B cell (primary cell): ENCODE measurements at regions of chr22 and their contacts with region 1.

Region 1: GRCh38 chr22:44080936-44081861 is 57.1 kb downstream of the PARVB start:
- DNase-seq: peak; percentile 80
- ATAC-seq: peak; percentile 61
- H3K4me3 ChIP-seq: no peak overlapping the region
- H3K4me3 Mint-ChIP-seq: no peak overlapping the region
- H3K27ac ChIP-seq: no peak overlapping the region
- H3K27ac Mint-ChIP-seq: no peak overlapping the region
- H3K4me1 ChIP-seq: peaks cover 0 to 9% of the 10 kb centered on the region in 2 donors
- H3K4me1 Mint-ChIP-seq: peaks cover 2% of the 10 kb centered on the region
- H3K27me3 ChIP-seq: no peaks in the 10 kb centered on the region
- H3K27me3 Mint-ChIP-seq: no peaks in the 10 kb centered on the region
- CTCF ChIP-seq: peak; percentile 90

Region 2: GRCh38 chr22:43726322-43726721 is 354.9 kb before region 1 on chr22:
- CTCF ChIA-PET with region 1: no interaction called
- POLR2A ChIA-PET with region 1: no interaction called
- intact Hi-C with region 1: no loop called
- DNase-seq: no peak
- ATAC-seq: no peak
- H3K4me3 ChIP-seq: no peak overlapping the region
- H3K4me3 Mint-ChIP-seq: no peak overlapping the region
- H3K27ac ChIP-seq: no peak overlapping the region
- H3K27ac Mint-ChIP-seq: no peak overlapping the region
- H3K4me1 ChIP-seq: no peaks in the 10 kb centered on the region
- H3K4me1 Mint-ChIP-seq: no peaks in the 10 kb centered on the region
- H3K27me3 ChIP-seq: peaks cover 0 to 5% (median 0%) of the 10 kb centered on the region in 4 experiments
- H3K27me3 Mint-ChIP-seq: peaks cover 26% of the 10 kb centered on the region
- CTCF ChIP-seq: no peak

Region 3: DNA sequence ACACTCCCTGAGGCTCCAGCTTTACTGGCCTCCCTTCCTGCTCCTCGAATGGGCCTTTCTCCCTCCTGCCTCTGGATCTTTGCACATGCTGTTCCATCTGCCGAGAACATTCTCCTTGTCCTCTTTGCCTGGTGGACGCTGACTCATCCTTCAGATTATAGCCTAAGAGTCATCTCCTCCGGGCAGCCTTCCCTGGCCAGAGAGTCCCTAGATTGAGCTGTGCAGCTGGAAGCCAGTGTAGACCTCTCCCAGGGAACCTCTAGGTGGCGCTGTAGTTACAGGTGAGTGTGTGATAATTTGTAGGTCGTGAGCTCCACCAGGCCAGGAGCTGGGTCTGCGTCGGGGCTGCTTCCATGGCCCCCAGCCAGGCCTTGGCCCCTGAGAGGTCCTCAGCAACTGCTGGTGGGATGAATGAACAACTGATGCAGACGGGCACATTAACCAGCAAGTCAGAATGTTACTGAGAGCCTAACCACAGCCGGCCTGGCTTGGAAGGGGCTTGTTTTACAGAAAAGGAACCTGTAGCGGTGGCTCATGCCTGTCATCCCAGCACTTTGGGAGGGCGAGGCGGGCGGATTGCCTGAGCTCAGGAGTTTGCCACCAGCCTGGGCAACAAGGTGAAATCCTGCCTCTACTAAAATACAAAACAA is 198.1 kb before region 1 on chr22:
- CTCF ChIA-PET with region 1: interaction called, 10 read pairs
- POLR2A ChIA-PET with region 1: no interaction called
- intact Hi-C with region 1: no loop called
- DNase-seq: peak; percentile 58
- ATAC-seq: no peak
- H3K4me3 ChIP-seq: no peak overlapping the region
- H3K4me3 Mint-ChIP-seq: no peak overlapping the region
- H3K27ac ChIP-seq: no peak overlapping the region
- H3K27ac Mint-ChIP-seq: no peak overlapping the region
- H3K4me1 ChIP-seq: peaks cover 0 to 5% of the 10 kb centered on the region in 2 donors
- H3K4me1 Mint-ChIP-seq: peaks cover 4% of the 10 kb centered on the region
- H3K27me3 ChIP-seq: peaks cover 0 to 4% (median 0%) of the 10 kb centered on the region in 4 experiments
- H3K27me3 Mint-ChIP-seq: peaks cover 29% of the 10 kb centered on the region
- CTCF ChIP-seq: peak; percentile 59

Region 4: DNA sequence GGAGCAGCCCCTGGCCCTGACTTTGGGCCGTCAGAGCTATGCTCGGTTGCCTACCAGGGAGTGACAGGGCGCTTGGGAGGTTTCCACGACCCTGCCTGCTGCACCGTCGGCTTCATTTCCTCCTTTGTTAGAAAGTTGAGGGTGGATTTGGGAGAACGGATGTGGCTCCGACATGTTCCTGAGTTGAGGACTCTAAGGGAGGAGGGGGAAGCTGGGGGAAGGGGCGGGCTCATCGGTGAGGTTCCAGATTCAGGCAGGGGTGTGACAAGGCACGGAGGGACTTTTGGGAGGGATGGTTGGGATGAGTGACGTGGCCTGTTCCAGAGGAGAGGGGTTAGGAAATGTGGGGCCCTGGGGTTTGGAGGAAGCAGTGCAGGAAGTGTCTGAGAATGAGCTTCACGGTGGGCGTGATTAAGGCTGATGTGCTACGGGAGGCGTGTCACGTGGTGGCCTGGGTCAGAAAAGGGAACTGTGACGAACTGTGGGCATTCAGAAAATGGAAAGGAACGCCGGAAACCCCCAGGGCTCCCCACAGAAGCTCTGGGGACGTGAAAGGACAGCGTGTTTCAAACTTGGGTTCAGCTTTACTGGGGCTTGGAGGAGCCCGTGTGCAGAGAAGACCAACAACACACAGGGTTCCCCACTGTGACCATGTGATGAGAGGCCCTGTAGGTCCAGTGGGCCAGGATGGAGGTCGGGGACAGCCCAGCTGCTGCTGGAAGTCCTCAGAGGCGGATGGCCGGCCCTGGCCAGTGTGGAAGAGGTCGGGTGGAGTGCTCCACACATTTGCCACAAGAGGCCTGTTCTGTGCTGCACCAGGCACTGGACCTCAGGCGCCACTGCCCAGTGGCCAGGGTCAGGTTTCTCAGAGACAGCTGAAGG is 54.3 kb before region 1 on chr22:
- CTCF ChIA-PET with region 1: interaction called, 17 read pairs
- POLR2A ChIA-PET with region 1: no interaction called
- intact Hi-C with region 1: loop called (anchors 1 kb)
- DNase-seq: peak; percentile 96
- ATAC-seq: peak; percentile 56
- H3K4me3 ChIP-seq: peak overlapping the region in 4 of 5 experiments; percentile 56 to 75 (median 68)
- H3K4me3 Mint-ChIP-seq: peak overlapping the region; percentile 92
- H3K27ac ChIP-seq: peak overlapping the region; percentile 99 to 100
- H3K27ac Mint-ChIP-seq: peak overlapping the region; percentile 97
- H3K4me1 ChIP-seq: peaks cover 64 to 72% of the 10 kb centered on the region in 2 donors
- H3K4me1 Mint-ChIP-seq: peaks cover 77% of the 10 kb centered on the region
- H3K27me3 ChIP-seq: no peaks in the 10 kb centered on the region
- H3K27me3 Mint-ChIP-seq: no peaks in the 10 kb centered on the region
- CTCF ChIP-seq: no peak

Region 5: GRCh38 chr22:44068422-44069191 is 12.6 kb before region 1 on chr22:
- CTCF ChIA-PET with region 1: interaction called, 82 read pairs
- POLR2A ChIA-PET with region 1: no interaction called
- intact Hi-C with region 1: no loop called
- DNase-seq: peak; percentile 96
- ATAC-seq: peak; percentile 71
- H3K4me3 ChIP-seq: peak overlapping the region in 4 of 5 experiments; percentile 12 to 48 (median 26)
- H3K4me3 Mint-ChIP-seq: peak overlapping the region; percentile 89
- H3K27ac ChIP-seq: peak overlapping the region; percentile 91 to 94
- H3K27ac Mint-ChIP-seq: peak overlapping the region; percentile 99
- H3K4me1 ChIP-seq: peaks cover 39% of the 10 kb centered on the region in 2 donors
- H3K4me1 Mint-ChIP-seq: peaks cover 60% of the 10 kb centered on the region
- H3K27me3 ChIP-seq: no peaks in the 10 kb centered on the region
- H3K27me3 Mint-ChIP-seq: no peaks in the 10 kb centered on the region
- CTCF ChIP-seq: no peak

Region 6: DNA sequence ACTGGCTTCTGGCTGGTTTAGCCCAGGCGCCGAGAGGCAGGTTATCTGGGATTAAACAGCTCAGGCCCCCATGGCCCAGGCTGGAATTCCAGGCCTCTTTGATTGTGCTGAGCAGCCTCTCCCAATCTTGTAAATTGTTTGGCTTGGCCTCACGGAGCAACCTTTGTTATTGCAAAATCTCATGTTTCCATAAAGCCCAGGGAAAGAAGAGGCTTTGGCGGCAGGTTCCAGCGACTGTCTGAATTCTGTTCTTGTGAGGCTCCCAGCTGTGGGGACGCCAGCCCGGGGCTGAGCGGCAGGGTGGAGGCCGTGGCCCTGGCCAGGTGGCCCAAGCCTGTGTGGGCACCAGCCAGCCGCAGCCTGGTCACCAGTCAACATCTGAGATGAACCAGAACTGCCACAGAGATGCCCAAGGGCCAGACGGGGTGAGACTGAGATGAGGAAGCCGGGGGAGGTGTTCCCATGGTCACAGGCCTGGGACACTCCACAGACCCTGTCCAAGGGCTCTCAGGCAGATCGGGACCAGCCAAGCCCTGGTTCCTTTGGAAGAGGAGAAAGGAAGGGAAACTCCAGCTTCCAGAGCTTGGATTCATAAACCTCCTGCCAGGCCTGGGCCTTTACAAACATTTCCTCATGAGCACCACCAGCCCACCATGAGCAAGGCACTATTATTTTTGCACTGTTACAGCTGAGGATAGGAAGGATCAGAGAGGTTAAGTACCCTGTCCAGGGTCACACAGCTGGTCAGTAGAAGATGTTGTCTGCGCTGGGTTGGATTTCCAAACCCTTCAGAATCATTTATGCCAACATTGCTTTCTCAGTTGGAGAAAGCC is 260.8 kb after region 1 on chr22:
- CTCF ChIA-PET with region 1: no interaction called
- POLR2A ChIA-PET with region 1: no interaction called
- intact Hi-C with region 1: no loop called
- DNase-seq: no peak
- ATAC-seq: no peak
- H3K4me3 ChIP-seq: no peak overlapping the region
- H3K4me3 Mint-ChIP-seq: no peak overlapping the region
- H3K27ac ChIP-seq: no peak overlapping the region
- H3K27ac Mint-ChIP-seq: no peak overlapping the region
- H3K4me1 ChIP-seq: no peaks in the 10 kb centered on the region
- H3K4me1 Mint-ChIP-seq: no peaks in the 10 kb centered on the region
- H3K27me3 ChIP-seq: peaks cover 0 to 17% (median 0%) of the 10 kb centered on the region in 4 experiments
- H3K27me3 Mint-ChIP-seq: peaks cover 18% of the 10 kb centered on the region
- CTCF ChIP-seq: no peak

Region 7: DNA sequence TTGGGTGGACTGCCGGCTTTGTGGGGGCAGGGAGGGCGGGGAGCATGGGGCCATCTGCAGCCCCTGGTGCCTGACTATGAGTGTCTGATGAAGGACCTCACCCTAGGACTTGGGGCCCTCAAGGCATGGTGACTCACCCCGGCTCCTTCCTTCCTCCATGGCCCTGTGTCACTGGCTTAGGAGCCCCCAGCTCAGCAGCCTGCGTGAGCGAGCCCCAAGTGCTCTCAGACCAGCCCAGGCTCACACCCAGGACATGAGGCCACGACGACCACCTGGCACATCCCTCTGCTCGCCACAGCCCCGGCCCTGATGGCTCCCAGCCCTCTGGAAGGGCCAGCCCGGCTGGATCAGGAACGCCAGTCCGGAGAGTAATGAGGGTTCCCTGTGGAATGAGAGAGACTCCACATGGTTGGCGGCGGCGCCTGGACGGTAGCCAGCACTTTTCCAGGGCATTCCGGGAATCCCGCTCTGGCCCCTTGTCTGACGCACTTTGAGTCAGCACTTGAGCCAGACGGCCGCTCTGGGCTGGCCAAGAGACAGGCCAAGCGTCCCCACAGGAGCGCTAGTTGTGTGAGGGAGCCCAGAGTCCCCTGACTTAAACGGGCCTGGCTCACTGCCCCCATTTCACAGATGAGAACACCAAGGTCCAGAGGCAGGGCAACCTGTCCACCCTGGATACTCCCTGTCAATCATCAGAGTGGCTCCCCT is 282.2 kb after region 1 on chr22:
- CTCF ChIA-PET with region 1: no interaction called
- POLR2A ChIA-PET with region 1: no interaction called
- intact Hi-C with region 1: no loop called
- DNase-seq: no peak
- ATAC-seq: no peak
- H3K4me3 ChIP-seq: no peak overlapping the region
- H3K4me3 Mint-ChIP-seq: no peak overlapping the region
- H3K27ac ChIP-seq: no peak overlapping the region
- H3K27ac Mint-ChIP-seq: no peak overlapping the region
- H3K4me1 ChIP-seq: no peaks in the 10 kb centered on the region
- H3K4me1 Mint-ChIP-seq: no peaks in the 10 kb centered on the region
- H3K27me3 ChIP-seq: no peaks in the 10 kb centered on the region
- H3K27me3 Mint-ChIP-seq: peaks cover 5% of the 10 kb centered on the region
- CTCF ChIP-seq: no peak

Region 8: DNA sequence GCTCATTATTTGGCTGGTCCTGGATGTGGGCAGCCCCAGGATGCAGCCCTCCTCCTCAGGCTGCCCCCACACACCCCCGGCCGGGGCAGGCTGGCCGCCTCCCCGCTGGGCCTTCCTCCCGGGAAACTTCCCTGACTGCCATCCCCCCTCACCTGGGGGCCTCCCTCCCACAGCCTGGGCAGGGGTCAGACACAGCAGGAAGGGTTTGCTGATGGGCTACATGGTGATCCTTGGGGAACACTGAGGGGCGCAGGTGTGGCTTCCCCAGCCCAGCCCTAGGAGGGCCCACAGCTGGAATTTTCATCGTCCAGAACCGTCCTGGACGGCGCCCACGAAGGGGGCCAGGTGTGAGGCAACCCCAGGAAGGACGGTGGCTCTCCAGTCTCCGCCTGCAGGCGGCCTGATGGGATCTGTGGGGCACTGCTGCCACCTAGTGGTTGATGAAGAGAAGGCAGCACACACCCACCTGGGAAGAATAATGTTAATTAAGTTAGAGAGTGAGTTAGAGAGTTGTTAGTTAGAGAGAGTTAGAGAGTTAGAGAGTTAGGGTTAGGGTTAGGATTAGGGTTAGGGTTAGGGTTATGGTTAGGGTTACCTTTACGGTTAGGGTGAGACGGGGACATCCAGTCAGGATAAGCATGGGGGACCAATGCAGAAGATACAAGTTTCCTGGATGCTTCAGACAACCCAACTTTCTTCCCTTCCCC is 544.9 kb after region 1 on chr22:
- CTCF ChIA-PET with region 1: interaction called, 9 read pairs
- POLR2A ChIA-PET with region 1: no interaction called
- intact Hi-C with region 1: loop called (anchors 1 kb)
- DNase-seq: peak; percentile 80
- ATAC-seq: peak; percentile 87
- H3K4me3 ChIP-seq: no peak overlapping the region
- H3K4me3 Mint-ChIP-seq: no peak overlapping the region
- H3K27ac ChIP-seq: no peak overlapping the region
- H3K27ac Mint-ChIP-seq: no peak overlapping the region
- H3K4me1 ChIP-seq: peaks cover 0 to 3% of the 10 kb centered on the region in 2 donors
- H3K4me1 Mint-ChIP-seq: no peaks in the 10 kb centered on the region
- H3K27me3 ChIP-seq: peaks cover 0 to 5% (median 0%) of the 10 kb centered on the region in 4 experiments
- H3K27me3 Mint-ChIP-seq: peaks cover 7% of the 10 kb centered on the region
- CTCF ChIP-seq: peak; percentile 99